AG04450 (cell line): ENCODE measurements at regions of chr4 and their contacts with region 1.

Region 1: DNA sequence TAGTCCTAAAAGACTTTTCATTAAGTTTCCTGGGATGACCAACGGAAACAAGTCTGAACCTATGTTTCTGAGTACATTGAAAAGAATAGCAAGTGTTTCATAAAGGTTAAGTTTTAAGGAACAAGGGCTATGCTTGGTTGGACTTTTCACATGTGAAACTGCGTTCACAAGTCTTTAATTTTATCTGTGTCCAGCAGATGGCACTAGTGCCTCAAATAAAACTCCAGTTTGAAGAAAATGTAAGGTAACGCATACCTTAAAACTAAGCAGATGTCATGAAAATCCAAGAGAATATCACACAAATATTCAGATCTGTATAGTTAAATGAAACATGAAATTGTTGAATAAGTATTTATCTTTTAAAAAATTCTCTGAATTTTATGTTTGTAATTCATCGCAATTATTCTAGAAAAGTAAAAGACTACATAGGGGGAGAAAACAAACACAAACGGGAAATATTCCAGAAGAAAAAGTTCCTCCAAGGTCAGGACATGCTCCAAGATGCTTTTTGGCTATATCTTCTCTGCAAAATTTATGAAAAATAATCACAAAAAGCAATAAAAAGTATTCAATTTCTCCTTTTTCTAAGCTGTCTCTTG is 89.6 kb upstream of the MAD2L1 start:
- DNase-seq: peak; percentile 49
- H3K4me3 ChIP-seq: no peak overlapping the region
- H3K27ac ChIP-seq: no peak overlapping the region
- H3K27me3 ChIP-seq: no peaks in the 10 kb centered on the region
- CTCF ChIP-seq: peak; percentile 62

Region 2: GRCh38 chr4:120144634-120145033 is 11.6 kb before region 1 on chr4:
- CTCF ChIA-PET with region 1: interaction called, 15 read pairs
- POLR2A ChIA-PET with region 1: no interaction called
- DNase-seq: no peak
- H3K4me3 ChIP-seq: no peak overlapping the region
- H3K27ac ChIP-seq: no peak overlapping the region
- H3K27me3 ChIP-seq: no peaks in the 10 kb centered on the region
- CTCF ChIP-seq: no peak

Region 3: GRCh38 chr4:120977435-120977997 is 821.3 kb after region 1 on chr4:
- CTCF ChIA-PET with region 1: interaction called, 15 read pairs
- POLR2A ChIA-PET with region 1: no interaction called
- DNase-seq: peak; percentile 33
- H3K4me3 ChIP-seq: no peak overlapping the region
- H3K27ac ChIP-seq: no peak overlapping the region
- H3K27me3 ChIP-seq: no peaks in the 10 kb centered on the region
- CTCF ChIP-seq: peak; percentile 84

Region 4: GRCh38 chr4:121094297-121094966 is 938.2 kb after region 1 on chr4:
- CTCF ChIA-PET with region 1: interaction called, 16 read pairs
- POLR2A ChIA-PET with region 1: no interaction called
- DNase-seq: no peak
- H3K4me3 ChIP-seq: no peak overlapping the region
- H3K27ac ChIP-seq: no peak overlapping the region
- H3K27me3 ChIP-seq: no peaks in the 10 kb centered on the region
- CTCF ChIP-seq: no peak